ENCODE measurements at regions of chr10 and their contacts with region 1.

Region 1: GRCh38 chr10:71893920-71894319 is 42.9 kb upstream of the PSAP start:
- DNase-seq: no peak
- H3K4me3 ChIP-seq: no peak overlapping the region
- H3K27ac ChIP-seq: no peak overlapping the region
- H3K27me3 ChIP-seq: peaks cover 5% of the 10 kb centered on the region
- CTCF ChIP-seq: no peak

Region 2: GRCh38 chr10:71512775-71513539 is 381.0 kb before region 1 on chr10:
- CTCF ChIA-PET with region 1: no interaction called
- POLR2A ChIA-PET with region 1: no interaction called
- DNase-seq: no peak
- H3K4me3 ChIP-seq: no peak overlapping the region
- H3K27ac ChIP-seq: no peak overlapping the region
- H3K27me3 ChIP-seq: peaks cover 2% of the 10 kb centered on the region
- CTCF ChIP-seq: no peak

Region 3: GRCh38 chr10:71666639-71667386 is 227.1 kb before region 1 on chr10:
- CTCF ChIA-PET with region 1: no interaction called
- POLR2A ChIA-PET with region 1: no interaction called
- DNase-seq: no peak
- H3K4me3 ChIP-seq: no peak overlapping the region
- H3K27ac ChIP-seq: no peak overlapping the region
- H3K27me3 ChIP-seq: peaks cover 26% of the 10 kb centered on the region
- CTCF ChIP-seq: no peak

Region 4: GRCh38 chr10:71835671-71836595 is 58.0 kb before region 1 on chr10:
- CTCF ChIA-PET with region 1: interaction called, 21 read pairs
- POLR2A ChIA-PET with region 1: interaction called, 3 read pairs
- DNase-seq: no peak
- H3K4me3 ChIP-seq: no peak overlapping the region
- H3K27ac ChIP-seq: no peak overlapping the region
- H3K27me3 ChIP-seq: no peaks in the 10 kb centered on the region
- CTCF ChIP-seq: no peak

Region 5: DNA sequence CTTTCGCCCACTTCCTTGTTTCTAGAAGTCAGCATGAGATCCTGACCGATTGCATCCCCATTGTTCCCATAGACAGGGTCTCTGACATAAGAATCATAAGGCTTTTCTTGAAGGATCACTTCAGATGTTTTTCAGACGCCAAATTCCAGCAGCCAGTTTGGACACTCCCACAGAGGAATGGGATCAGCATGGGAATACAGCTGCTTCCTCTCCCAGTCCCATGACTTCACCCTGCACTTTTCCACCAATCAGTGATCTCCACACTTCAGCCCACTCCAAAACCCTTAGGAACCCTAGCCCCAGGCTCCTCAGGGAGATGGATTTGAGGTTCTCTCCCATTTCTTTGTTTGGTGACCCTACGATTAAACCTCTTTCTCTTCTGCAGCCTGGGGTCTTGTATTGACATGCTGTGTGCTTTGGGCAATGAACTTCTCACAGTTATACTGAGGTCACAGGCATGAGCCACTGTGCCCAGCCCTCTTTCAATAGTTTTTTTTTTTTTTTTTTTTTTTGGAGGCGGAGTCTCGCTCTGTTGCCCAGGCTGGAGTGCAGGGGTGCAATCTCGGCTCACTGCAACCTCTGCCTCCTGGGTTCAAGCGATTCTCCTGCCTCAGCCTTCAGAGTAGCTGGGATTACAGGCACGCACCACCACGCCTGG is 17.5 kb after region 1 on chr10:
- CTCF ChIA-PET with region 1: interaction called, 49 read pairs
- POLR2A ChIA-PET with region 1: no interaction called
- DNase-seq: no peak
- H3K4me3 ChIP-seq: no peak overlapping the region
- H3K27ac ChIP-seq: no peak overlapping the region
- H3K27me3 ChIP-seq: peaks cover 13% of the 10 kb centered on the region
- CTCF ChIP-seq: no peak

Region 6: DNA sequence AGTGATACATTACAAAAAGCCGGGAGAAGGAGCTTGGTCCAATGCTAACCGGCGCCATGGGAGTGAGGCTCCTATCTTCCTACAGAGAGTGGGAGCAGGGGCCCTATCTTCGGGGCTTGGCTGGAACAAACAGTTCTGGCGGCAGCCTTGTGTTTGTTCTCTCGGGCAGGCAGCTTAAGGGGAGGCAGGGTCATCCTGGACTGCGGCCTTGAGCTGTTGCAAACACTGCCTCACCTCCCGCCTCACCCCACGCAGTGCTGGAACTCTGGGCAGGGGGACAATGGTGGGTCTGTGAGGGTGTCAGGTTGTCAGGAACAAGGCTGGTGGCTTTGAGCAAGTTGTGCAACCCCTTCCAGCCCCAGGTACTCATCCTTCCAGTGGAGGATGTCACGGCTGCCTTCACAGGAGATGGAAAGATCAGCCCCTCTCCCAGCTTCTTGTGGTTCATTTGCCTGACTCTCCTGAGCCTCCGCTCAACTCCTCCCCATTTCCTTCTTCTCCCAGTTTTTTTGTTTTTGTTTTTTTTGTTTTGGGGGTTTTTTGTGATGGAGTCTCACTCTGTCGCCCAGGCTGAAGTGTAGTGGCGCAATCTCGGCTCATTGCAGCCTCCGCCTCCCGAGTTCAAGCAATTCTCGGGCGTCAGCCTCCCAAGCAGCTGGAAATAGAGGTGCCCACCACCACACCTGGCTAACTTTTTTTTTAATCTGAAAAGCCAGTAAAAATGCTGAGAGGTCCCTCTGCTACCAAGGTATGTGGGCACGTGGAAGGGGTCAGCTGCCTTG is 137.0 kb after region 1 on chr10:
- CTCF ChIA-PET with region 1: interaction called, 14 read pairs
- POLR2A ChIA-PET with region 1: interaction called, 3 read pairs
- DNase-seq: no peak
- H3K4me3 ChIP-seq: no peak overlapping the region
- H3K27ac ChIP-seq: no peak overlapping the region
- H3K27me3 ChIP-seq: peaks cover 16% of the 10 kb centered on the region
- CTCF ChIP-seq: no peak

Region 7: DNA sequence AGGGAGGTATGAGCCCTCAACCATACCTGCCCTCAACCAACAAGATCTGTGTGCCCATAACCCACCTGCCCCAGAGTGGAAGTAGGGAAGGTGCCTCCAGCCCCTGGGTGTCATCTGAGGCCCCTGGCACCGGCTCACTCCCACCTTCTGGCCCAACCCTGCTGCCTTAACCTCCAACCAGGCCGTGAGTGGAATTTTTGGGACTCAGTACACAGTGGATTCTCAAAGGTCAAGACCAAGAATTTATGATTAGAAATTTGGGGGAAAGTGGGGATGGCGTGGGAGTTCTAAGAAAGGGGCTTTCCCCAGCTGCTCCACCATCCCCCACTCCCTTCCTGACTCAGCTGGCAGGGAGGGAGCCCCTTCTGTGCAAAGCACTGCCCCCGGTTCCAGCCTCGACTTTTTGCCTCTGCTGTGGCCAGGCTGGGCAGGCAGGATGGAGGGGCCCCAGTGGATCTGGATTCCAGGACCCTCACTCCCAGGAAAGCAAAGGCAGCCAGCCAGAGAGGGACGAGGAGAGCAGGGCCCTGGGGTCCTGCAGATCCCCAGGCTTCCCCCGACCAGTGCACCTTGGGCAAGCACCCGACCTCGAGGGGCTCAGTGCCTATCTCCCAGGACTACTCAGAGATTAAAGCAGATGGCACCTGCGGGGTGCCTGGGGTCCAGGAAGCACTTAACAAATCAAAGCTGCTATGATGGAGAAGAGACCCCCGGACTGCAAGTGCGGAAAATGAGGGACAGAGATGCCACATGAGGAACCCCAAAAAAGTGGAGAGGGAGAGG is 181.6 kb after region 1 on chr10:
- CTCF ChIA-PET with region 1: no interaction called
- POLR2A ChIA-PET with region 1: no interaction called
- DNase-seq: no peak
- H3K4me3 ChIP-seq: no peak overlapping the region
- H3K27ac ChIP-seq: no peak overlapping the region
- H3K27me3 ChIP-seq: peaks cover 35% of the 10 kb centered on the region
- CTCF ChIP-seq: no peak

Region 8: GRCh38 chr10:72088889-72089575 is 195.1 kb after region 1 on chr10:
- CTCF ChIA-PET with region 1: interaction called, 12 read pairs
- POLR2A ChIA-PET with region 1: no interaction called
- DNase-seq: no peak
- H3K4me3 ChIP-seq: no peak overlapping the region
- H3K27ac ChIP-seq: no peak overlapping the region
- H3K27me3 ChIP-seq: peaks cover 50% of the 10 kb centered on the region
- CTCF ChIP-seq: no peak

Measured in AG04450 (cell line).